HCT116 (cell line): ENCODE measurements at regions of chr3 and their contacts with region 1.

Region 1: DNA sequence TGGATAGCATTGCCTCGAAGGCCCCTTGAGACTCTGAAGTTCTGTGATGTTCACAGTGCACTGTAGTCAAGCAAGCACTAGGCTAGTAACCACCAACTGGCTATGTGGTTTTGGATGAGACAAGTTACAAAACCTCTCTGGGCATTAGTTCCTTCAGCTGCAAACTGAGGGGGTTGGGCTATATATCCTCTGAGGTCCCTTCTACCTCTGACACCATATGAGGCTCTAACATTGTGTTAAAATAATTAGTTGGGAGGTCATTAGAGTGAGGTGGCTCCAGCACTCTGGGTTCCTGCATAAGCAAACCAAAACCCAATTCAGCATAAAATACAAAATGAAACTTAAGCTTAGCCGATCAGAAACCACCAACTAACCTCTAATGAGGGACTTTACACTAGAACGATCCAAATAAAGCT is 209.5 kb upstream of the LRRN1 start:
- DNase-seq: no peak
- ATAC-seq: no peak
- H3K4me3 ChIP-seq: no peak overlapping the region
- H3K27ac ChIP-seq: no peak overlapping the region
- H3K4me1 ChIP-seq: no peaks in the 10 kb centered on the region
- H3K27me3 ChIP-seq: no peaks in the 10 kb centered on the region
- CTCF ChIP-seq: no peak
- POLR2A ChIP-seq: no peak
- RAD21 ChIP-seq: no peak

Region 2: DNA sequence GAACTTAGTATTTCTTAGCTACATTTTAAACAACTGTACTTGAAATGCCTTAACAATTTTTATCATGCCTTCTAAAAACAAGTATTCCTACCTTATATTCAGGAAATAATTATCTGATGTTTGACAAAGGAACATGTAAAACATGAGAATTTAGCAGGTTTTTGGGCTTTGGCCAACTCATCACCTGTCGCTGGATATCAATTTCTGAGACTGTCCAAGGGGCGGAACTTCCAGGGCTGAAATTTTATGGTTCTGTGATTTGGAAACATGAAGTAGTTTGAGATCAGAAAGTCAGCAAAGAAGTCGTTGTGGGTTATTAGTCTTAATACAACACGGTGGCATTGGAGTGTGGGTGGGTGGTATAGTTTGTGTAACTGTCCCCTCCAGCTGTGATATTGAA is 72.7 kb before region 1 on chr3:
- CTCF ChIA-PET with region 1: no interaction called
- POLR2A ChIA-PET with region 1: no interaction called
- RAD21 ChIA-PET with region 1: no interaction called
- intact Hi-C with region 1: loop called (anchors 5 kb)
- DNase-seq: no peak
- ATAC-seq: no peak
- H3K4me3 ChIP-seq: no peak overlapping the region
- H3K27ac ChIP-seq: no peak overlapping the region
- H3K4me1 ChIP-seq: no peaks in the 10 kb centered on the region
- H3K27me3 ChIP-seq: no peaks in the 10 kb centered on the region
- CTCF ChIP-seq: no peak
- POLR2A ChIP-seq: no peak
- RAD21 ChIP-seq: no peak